Activated CD4-positive, alpha-beta memory T cell treated with anti-CD3 and anti-CD28 coated beads for 36 hours (primary cell): ENCODE measurements at regions of chr16 and their contacts with region 1.

Region 1: GRCh38 chr16:4475880-4476788 is at the start of gene HMOX2:
- DNase-seq: peak; percentile 97
- H3K4me3 Mint-ChIP-seq: peak within 1 kb of the TSS; percentile 89
- H3K27ac Mint-ChIP-seq: peak within 1 kb of the TSS; percentile 87
- H3K4me1 Mint-ChIP-seq: peaks cover 38% of the 10 kb centered on the region
- H3K27me3 Mint-ChIP-seq: no peaks in the 10 kb centered on the region
- total RNA-seq, gene HMOX2: 69.1 to 76.0 TPM

Region 2: GRCh38 chr16:4271176-4272066 is 204.7 kb before region 1 on chr16:
- CTCF ChIA-PET with region 1: no interaction called
- POLR2A ChIA-PET with region 1: interaction called, 4 read pairs
- intact Hi-C with region 1: loop called (anchors 10 kb)
- DNase-seq: peak; percentile 94
- H3K4me3 Mint-ChIP-seq: peak overlapping the region; percentile 86
- H3K27ac Mint-ChIP-seq: peak overlapping the region; percentile 93
- H3K4me1 Mint-ChIP-seq: peaks cover 14% of the 10 kb centered on the region
- H3K27me3 Mint-ChIP-seq: no peaks in the 10 kb centered on the region

Region 3: DNA sequence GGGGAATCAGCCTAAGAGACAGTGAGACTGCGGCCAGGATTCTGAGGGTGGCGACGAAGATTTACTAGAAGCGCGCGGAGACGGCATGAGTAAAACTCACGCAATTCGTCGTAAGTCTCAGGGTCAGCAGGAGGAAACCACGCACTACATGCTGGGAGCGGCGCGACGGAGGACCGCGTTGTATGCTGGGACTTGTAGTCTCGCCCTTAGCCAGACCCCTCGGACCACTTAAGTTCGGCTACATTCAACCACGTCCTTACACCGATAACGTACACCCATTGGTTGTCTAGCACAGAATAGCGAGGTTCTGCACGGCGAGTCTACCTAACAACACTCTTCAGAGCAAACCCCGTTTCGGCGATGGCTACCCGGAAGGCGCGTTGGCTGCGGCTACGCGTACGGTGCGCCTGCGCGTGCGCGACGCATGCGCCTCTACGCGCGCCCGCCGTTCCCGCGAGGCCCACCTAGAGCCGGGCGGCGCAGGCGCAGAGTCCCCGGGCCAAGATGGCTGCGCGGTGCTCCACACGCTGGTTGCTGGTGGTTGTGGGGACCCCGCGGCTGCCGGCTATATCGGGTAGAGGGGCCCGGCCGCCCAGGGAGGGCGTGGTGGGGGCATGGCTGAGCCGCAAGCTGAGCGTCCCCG is 50.6 kb before region 1 on chr16 and contains the start of gene DNAJA3:
- CTCF ChIA-PET with region 1: no interaction called
- POLR2A ChIA-PET with region 1: interaction called, 6 read pairs
- intact Hi-C with region 1: loop called (anchors 2 kb)
- DNase-seq: peak; percentile 94
- H3K4me3 Mint-ChIP-seq: peak within 1 kb of the TSS; percentile 94
- H3K27ac Mint-ChIP-seq: peak within 1 kb of the TSS; percentile 100
- H3K4me1 Mint-ChIP-seq: peaks cover 27% of the 10 kb centered on the region
- H3K27me3 Mint-ChIP-seq: no peaks in the 10 kb centered on the region
- total RNA-seq, gene DNAJA3: 74.6 to 75.0 TPM

Region 4: GRCh38 chr16:4500272-4500671 is 24.1 kb after region 1 on chr16:
- CTCF ChIA-PET with region 1: interaction called, 43 read pairs
- POLR2A ChIA-PET with region 1: interaction called, 12 read pairs
- intact Hi-C with region 1: loop called (anchors 1 kb)
- DNase-seq: peak; percentile 55
- H3K4me3 Mint-ChIP-seq: no peak overlapping the region
- H3K27ac Mint-ChIP-seq: peak overlapping the region; percentile 20
- H3K4me1 Mint-ChIP-seq: peaks cover 83% of the 10 kb centered on the region
- H3K27me3 Mint-ChIP-seq: no peaks in the 10 kb centered on the region

Region 5: DNA sequence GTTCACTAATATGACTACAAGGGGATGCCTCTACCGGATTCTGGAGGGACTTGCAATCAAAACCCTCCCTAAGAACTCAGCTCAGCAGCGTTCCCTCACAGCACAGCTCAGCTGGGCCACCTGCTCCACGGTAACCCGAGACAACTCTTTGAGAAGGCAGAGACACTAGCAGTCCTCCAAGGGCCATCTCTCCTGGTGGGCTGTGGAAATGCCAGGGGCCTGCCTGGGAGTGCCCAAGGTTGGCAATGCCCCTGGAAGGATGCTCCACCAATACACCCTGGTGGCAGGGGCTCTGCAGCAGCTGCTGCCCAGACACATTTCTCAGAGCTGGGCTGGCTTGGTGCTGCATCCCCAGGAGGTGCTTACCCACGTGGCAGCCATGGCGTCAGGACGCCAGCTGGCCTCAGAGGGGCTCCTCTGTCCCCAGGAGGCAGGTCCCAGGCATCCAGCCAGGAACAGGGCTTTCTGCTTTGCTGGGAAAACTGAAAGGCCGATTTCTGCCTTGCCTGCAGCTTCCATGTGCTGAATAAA is 46.0 kb after region 1 on chr16:
- CTCF ChIA-PET with region 1: no interaction called
- POLR2A ChIA-PET with region 1: no interaction called
- intact Hi-C with region 1: no loop called
- DNase-seq: no peak
- H3K4me3 Mint-ChIP-seq: no peak overlapping the region
- H3K27ac Mint-ChIP-seq: no peak overlapping the region
- H3K4me1 Mint-ChIP-seq: peaks cover 3% of the 10 kb centered on the region
- H3K27me3 Mint-ChIP-seq: no peaks in the 10 kb centered on the region

Region 6: DNA sequence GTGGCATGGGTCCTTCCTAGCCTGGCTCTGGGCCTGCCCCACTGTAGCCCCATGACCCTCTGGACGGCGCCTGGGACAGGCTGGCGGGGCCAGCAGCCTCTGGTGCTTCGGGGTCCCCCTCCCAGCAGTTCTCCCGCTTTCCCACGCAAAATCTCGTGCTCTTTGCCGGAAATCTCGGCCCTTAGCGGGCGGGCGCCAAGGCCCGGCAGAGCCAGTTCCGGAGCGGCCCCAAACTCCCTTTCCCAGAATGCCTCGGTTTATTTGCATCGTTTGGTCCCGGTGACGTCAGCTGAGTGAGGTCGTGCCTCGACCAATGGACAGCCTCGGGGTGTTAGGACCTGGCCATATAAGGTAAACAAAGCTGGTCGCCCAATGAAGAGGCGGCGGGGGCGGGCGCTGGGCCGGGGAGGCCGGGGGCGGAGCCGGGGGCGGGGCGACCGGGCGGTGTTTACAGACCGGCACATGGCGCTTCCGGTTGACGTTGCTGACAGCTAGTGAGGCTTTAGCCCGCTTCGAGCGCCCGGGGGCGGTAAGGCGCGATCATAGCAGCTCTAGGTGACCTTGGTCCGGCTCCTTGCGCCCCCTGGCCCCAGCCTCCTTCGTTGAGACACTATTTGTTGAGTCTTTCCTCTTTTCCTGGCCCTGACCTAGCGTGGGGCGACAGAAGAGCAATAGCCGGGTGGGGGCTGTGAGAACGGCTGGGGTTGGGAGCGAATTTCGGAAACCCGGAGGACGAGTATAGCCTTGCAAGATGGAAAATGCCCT is 140.1 kb after region 1 on chr16:
- CTCF ChIA-PET with region 1: interaction called, 7 read pairs
- POLR2A ChIA-PET with region 1: no interaction called
- intact Hi-C with region 1: loop called (anchors 1 kb)
- DNase-seq: peak; percentile 100
- H3K4me3 Mint-ChIP-seq: peak overlapping the region; percentile 88
- H3K27ac Mint-ChIP-seq: peak overlapping the region; percentile 95
- H3K4me1 Mint-ChIP-seq: peaks cover 23% of the 10 kb centered on the region
- H3K27me3 Mint-ChIP-seq: no peaks in the 10 kb centered on the region